Heart right ventricle (tissue), 16 donors: ENCODE measurements at regions of chr5 and their contacts with region 1.

Region 1: DNA sequence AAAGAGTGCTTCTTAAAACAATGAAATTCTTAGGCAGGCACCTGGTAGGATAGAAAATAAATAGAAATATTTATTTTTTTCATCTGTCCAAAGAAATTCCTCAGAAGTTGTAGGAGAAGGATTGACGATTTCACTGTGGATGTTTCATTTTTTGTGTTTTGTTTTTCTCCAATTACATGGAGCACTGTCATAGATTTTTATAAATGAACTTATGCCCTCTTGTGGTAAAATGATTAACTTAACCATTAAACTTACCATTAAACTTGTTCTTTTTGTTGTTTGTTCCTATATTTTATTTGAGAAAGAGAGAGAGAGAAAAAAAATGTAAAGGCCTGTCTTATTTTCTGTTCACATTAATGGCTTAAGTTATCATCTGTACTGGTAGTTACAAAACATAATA is 339.2 kb downstream of the PRR16 start:
- DNase-seq: no peak
- ATAC-seq: no peak
- H3K4me3 ChIP-seq: no peak overlapping the region
- H3K27ac ChIP-seq: no peak overlapping the region
- H3K4me1 ChIP-seq: peaks cover 0 to 6% (median 0%) of the 10 kb centered on the region in 9 donors
- H3K27me3 ChIP-seq: no peaks in the 10 kb centered on the region
- CTCF ChIP-seq: peak in 6 of 9 donors; percentile 22 to 54 (median 41)

Region 2: GRCh38 chr5:119930490-119930889 is 872.8 kb before region 1 on chr5:
- intact Hi-C with region 1: loop called in 1 of 10 experiments (anchors 10 kb)
- DNase-seq: no peak
- ATAC-seq: no peak
- H3K4me3 ChIP-seq: no peak overlapping the region
- H3K27ac ChIP-seq: no peak overlapping the region
- H3K4me1 ChIP-seq: no peaks in the 10 kb centered on the region
- H3K27me3 ChIP-seq: no peaks in the 10 kb centered on the region
- CTCF ChIP-seq: no peak

Region 3: DNA sequence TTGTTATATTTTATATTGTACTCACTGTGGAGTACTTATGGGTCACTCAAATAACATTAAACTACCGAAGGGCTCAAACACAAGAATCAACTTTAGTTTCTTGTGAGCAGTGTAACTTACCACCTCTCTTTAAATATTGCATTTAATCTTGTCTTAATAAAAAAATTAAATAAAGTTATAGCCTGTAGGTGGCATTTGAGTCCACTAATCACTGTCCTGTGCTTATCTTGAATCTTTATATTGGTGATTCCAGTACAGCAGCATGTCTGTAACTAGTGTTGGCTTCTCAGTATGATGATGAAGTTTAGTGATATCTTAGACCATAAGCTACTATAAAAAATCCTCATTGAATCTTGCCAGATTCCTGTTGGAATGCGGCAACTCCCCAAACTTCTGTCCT is 860.1 kb before region 1 on chr5:
- intact Hi-C with region 1: loop called in 8 of 10 experiments (anchors 5 to 10 kb)
- DNase-seq: no peak
- ATAC-seq: peak in 2 of 8 donors; percentile 49 to 55
- H3K4me3 ChIP-seq: no peak overlapping the region
- H3K27ac ChIP-seq: no peak overlapping the region
- H3K4me1 ChIP-seq: no peaks in the 10 kb centered on the region
- H3K27me3 ChIP-seq: no peaks in the 10 kb centered on the region
- CTCF ChIP-seq: peak in 8 of 9 donors; percentile 8 to 60 (median 38)

Region 4: DNA sequence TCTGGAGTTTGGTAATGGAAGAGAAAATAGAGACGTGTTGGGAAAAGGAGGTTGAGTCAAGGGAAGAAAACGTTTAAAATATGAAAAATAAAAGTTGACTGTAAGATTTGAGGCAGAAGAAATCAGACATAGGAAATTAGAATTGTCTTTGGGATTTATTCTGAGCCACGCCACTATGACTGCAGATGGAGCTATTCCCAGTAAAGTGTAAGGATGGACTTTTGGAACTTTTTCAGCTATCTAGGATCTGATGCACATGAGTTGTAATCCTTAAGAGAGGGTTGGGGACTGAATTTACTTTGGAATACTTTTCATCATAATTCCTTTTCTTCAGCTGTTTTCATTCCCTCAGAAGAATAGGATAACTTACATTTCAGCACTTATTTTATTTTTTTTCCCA is 837.3 kb before region 1 on chr5:
- intact Hi-C with region 1: loop called in 1 of 10 experiments (anchors 10 kb)
- DNase-seq: no peak
- ATAC-seq: peak in 4 of 8 donors; percentile 57 to 77 (median 69)
- H3K4me3 ChIP-seq: no peak overlapping the region
- H3K27ac ChIP-seq: peak overlapping the region in 1 of 10 donors; percentile 6
- H3K4me1 ChIP-seq: peaks cover 0 to 5% (median 0%) of the 10 kb centered on the region in 9 donors
- H3K27me3 ChIP-seq: no peaks in the 10 kb centered on the region
- CTCF ChIP-seq: peak in 7 of 9 donors; percentile 14 to 52 (median 34)

Region 5: GRCh38 chr5:120765189-120765588 is 38.1 kb before region 1 on chr5:
- intact Hi-C with region 1: no loop called
- DNase-seq: no peak
- ATAC-seq: no peak
- H3K4me3 ChIP-seq: no peak overlapping the region
- H3K27ac ChIP-seq: no peak overlapping the region
- H3K4me1 ChIP-seq: no peaks in the 10 kb centered on the region
- H3K27me3 ChIP-seq: no peaks in the 10 kb centered on the region
- CTCF ChIP-seq: no peak

Region 6: GRCh38 chr5:121090822-121091221 is 287.5 kb after region 1 on chr5:
- intact Hi-C with region 1: no loop called
- DNase-seq: no peak
- ATAC-seq: no peak
- H3K4me3 ChIP-seq: no peak overlapping the region
- H3K27ac ChIP-seq: no peak overlapping the region
- H3K4me1 ChIP-seq: no peaks in the 10 kb centered on the region
- H3K27me3 ChIP-seq: no peaks in the 10 kb centered on the region
- CTCF ChIP-seq: no peak

Region 7: DNA sequence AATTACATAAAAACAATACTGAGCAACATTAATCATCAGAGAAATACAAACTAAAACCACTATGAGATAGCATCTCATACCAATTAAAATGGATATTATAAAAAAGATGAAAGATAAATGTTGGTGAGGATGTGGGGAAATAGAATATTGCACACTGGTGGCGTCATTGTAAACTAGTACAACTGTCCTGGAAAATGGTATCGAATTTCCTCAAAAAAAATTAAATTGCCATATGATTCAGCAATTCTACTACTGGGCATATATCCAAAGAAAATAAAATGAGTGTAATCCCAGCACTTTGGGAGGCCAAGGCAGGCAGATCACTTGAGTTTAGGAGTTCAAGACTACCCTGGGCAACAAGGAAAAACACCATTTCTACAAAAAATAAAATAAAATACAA is 722.4 kb after region 1 on chr5:
- intact Hi-C with region 1: no loop called
- DNase-seq: no peak
- ATAC-seq: no peak
- H3K4me3 ChIP-seq: no peak overlapping the region
- H3K27ac ChIP-seq: no peak overlapping the region
- H3K4me1 ChIP-seq: no peaks in the 10 kb centered on the region
- H3K27me3 ChIP-seq: no peaks in the 10 kb centered on the region
- CTCF ChIP-seq: no peak